GM12878 (cell line): ENCODE measurements at regions of chr1 and their contacts with region 1.

Region 1: DNA sequence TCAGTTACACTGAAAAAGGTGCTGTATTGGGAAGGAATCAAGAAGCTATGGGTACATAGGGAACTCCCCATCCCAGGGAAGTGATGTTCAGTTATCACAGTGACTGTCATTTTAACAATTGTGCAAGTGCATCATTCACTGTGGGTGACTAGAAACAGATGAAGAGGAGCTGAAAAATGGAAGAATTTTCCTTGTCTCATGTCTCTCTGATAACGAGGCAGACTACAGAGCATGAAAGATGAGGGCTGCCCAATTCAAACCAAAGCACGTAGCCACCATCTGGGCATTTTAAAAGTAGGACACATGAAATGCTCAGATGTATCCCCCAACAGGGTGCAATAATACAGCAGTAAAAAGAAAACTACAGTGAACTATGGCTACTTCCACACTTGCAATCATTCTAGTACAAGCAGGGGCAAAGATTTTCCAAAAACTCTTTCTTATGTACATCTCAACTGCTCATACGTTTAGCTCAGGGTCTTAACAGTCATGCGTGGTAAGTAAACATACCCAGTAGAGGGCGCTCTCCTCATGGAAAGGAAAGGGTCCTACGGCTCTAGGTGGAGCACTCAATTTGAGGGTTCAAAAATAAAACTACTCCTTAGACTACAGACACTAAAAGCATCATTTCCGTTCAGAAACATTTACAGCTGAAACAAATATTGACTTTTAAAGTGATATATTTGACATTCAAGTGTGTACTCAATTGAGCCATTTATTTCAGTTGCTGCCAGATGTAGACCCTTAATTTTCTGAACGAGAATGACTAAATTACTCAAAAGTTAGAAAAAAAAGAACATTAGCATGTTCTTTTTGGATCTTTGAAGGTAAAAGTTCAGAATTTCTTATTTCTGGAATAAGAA is 143.2 kb downstream of the KCTD3 start:
- DNase-seq: no peak
- ATAC-seq: peak; percentile 96
- H3K4me3 ChIP-seq: no peak overlapping the region
- H3K27ac ChIP-seq: no peak overlapping the region
- H3K4me1 ChIP-seq: no peaks in the 10 kb centered on the region
- H3K27me3 ChIP-seq: no peaks in the 10 kb centered on the region; a peak in 1 of 4 replicates
- CTCF ChIP-seq: peak; percentile 57 to 74 (median 73)
- EP300 ChIP-seq: no peak
- POLR2A ChIP-seq: no peak
- RAD21 ChIP-seq: peak; percentile 58

Region 2: DNA sequence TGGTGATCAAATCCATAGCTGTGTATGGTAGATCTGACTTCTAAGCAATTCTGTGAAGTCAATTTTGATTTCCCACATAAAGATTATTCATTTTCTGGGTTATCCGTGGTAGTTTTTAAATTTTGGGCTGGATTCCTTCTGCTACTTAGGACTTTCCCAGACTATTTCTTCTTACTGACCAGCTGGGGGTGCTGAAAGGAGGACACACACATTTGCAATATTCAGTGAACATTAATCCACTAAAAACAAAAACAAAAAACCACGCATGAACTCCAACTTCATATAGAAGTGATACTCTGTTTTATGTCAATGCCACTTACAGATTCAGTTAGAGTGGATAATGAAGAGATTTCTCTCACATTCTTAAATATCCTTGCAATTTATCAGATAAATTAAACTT is 37.8 kb before region 1 on chr1:
- CTCF ChIA-PET with region 1: interaction called, 10 read pairs
- POLR2A ChIA-PET with region 1: no interaction called
- RAD21 ChIA-PET with region 1: interaction called, 3 read pairs
- SMC1A ChIA-PET with region 1: interaction called, 3 read pairs
- in situ Hi-C with region 1: no loop called
- intact Hi-C with region 1: no loop called
- DNase-seq: no peak
- ATAC-seq: no peak
- H3K4me3 ChIP-seq: no peak overlapping the region
- H3K27ac ChIP-seq: no peak overlapping the region
- H3K4me1 ChIP-seq: no peaks in the 10 kb centered on the region
- H3K27me3 ChIP-seq: no peaks in the 10 kb centered on the region
- CTCF ChIP-seq: no peak
- EP300 ChIP-seq: no peak
- POLR2A ChIP-seq: no peak
- RAD21 ChIP-seq: no peak

Region 3: DNA sequence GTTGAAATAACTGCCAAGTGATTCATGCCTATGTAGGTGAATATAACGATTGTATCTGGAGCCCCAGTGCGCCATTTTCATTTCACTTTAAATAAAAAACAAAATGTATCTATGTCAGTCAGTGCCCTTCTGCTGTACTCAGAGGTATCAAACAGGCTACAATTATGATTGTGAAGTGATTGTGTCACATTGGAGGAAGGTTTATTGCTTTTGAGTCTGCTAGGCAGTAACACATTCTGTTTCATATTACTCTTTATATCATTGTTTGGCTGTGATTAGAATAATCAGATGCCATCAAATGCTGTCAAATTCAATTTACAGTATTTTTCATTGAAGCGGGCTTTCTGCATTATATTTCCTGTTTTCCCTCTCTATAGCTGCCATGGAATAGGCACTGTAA is 28.8 kb after region 1 on chr1:
- CTCF ChIA-PET with region 1: no interaction called
- POLR2A ChIA-PET with region 1: no interaction called
- RAD21 ChIA-PET with region 1: no interaction called
- SMC1A ChIA-PET with region 1: no interaction called
- in situ Hi-C with region 1: no loop called
- intact Hi-C with region 1: no loop called
- DNase-seq: no peak
- ATAC-seq: no peak
- H3K4me3 ChIP-seq: no peak overlapping the region
- H3K27ac ChIP-seq: no peak overlapping the region
- H3K4me1 ChIP-seq: no peaks in the 10 kb centered on the region
- H3K27me3 ChIP-seq: no peaks in the 10 kb centered on the region
- CTCF ChIP-seq: no peak
- EP300 ChIP-seq: no peak
- POLR2A ChIP-seq: no peak
- RAD21 ChIP-seq: no peak